Brain microvascular endothelial cell (primary cell): ENCODE measurements at regions of chr1 and their contacts with region 1.

Region 1: DNA sequence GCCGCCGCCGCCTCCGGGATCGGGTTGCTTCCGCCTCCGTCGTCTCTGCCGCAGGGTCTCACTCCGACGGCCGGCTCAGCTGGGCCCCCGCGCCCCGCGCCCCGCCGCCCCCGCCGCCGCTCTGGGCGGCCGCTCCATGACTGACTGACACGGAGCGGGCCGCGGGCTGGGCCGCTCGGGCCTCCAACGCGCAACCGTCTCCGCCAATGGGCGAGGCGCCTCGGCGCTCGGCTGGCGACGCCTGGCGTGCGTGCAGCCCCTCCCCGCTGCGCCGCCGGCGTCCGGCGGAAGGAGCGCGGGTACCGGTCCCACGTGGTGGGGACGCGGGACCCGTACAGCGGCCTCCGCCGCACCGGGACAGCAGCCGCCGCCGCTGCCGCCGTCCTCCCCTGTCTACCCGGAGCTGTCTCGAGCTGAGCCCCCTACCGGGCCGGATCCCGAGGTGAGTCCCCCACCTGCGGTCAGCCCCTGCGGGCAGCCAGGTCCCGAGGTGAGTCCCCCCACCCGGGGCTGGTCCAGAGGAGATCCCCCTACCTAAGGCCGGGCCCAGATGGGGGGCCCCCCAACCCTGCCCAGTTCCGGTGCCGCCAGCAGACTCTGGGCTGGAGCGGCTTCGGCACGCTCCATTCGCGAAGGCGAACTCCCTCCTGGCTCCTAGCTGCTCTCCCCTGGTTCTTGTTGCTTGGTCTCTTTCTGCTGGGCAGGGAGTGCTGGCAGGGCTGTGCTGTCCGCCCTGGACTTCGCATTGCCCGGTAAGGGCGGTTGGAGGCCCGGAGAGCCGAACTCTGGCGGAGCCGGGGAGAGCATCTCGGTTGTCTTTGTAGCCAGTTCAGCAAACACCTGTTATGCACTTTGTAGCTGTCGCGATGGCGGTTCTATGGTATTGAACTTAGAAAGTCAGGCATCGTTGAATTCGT is at the starts of genes TAF5L and URB2:
- DNase-seq: peak; percentile 76
- H3K4me3 ChIP-seq: peak within 1 kb of the TSS; percentile 91
- H3K27ac ChIP-seq: peak within 1 kb of the TSS; percentile 78
- H3K27me3 ChIP-seq: no peaks in the 10 kb centered on the region
- CTCF ChIP-seq: no peak

Region 2: DNA sequence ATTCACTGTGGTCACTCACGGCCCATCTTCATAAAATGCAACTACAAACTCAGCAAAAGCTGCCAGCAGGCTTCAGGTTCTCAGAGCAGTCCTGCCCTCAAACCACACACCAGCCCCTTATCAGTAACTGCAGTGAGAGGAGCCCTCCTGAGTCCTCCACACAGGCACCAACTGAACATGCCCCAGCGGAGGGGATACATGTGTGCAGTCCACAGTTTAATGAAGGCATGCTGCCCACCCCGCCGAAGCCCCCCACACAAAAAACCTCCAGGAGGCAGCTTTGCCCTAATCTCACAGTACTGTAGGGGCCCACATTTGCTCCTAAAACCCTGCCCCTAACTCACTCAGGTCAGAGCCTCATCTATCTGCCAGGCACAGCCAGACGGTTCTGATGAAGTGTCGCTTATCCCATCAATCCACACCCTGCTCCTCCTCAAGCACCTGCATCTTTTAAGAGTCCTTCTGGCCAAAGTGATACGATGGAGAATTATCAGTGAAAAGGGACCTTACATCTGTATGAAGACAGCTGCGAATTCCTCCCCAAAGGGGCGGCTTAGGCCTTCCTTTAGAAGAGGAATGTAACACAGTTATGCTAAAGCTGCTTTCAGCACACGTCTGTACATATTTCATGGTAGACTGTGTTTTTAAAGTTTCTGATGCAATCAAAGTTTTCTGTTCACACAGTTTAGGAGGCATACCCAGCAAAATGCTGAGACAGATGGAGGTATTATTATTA is 71.1 kb before region 1 on chr1:
- in situ Hi-C with region 1: no loop called
- DNase-seq: no peak
- H3K4me3 ChIP-seq: no peak overlapping the region
- H3K27ac ChIP-seq: no peak overlapping the region
- H3K27me3 ChIP-seq: no peaks in the 10 kb centered on the region
- CTCF ChIP-seq: no peak

Region 3: GRCh38 chr1:230310381-230311163 is 684.4 kb after region 1 on chr1:
- in situ Hi-C with region 1: loop called (anchors 25 kb)
- DNase-seq: peak; percentile 53
- H3K4me3 ChIP-seq: no peak overlapping the region
- H3K27ac ChIP-seq: no peak overlapping the region
- H3K27me3 ChIP-seq: no peaks in the 10 kb centered on the region
- CTCF ChIP-seq: peak; percentile 95